ENCODE measurements at regions of chr17 and their contacts with region 1.

Region 1: GRCh38 chr17:29807520-29808351 is 122.3 kb downstream of the SSH2 start:
- DNase-seq: peak; percentile 49 to 72
- ATAC-seq: peak; percentile 81

Region 2: DNA sequence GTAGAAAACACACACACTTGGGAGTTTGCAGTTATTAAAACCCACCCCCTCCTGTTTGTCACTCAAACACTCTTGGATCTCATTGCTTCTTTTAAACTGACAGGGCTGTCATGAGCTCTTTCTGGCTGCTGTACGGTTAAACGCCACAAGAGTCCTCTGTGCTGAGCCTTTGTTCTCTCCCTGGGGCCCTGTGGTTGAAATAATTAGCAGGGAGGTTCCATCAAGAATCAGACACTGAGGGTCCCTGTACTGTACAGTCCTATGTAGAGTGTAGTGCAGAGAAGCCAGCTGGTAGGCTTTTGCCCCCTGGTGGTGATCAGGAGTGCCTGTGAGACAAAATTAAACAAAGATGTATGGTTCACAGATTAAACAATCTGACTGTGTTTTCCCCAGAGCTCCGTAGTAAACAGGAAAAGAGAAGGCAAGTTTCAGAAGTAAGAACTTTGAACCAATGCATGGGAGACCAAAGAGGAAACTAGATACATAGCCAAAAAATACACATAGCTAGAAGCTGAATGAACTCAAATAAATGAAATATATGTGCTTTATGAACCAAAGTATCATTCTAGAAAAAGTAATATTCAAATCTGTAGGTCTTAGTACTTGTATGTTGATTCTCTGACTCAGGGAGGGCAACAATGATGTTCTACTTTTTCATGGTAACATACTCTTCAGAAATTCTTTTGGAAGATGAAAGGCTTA is 123.6 kb after region 1 on chr17:
- intact Hi-C with region 1: loop called (anchors 5 to 10 kb)
- DNase-seq: peak; percentile 64 to 72
- ATAC-seq: peak; percentile 50

Region 3: GRCh38 chr17:30021708-30022317 is 214.1 kb after region 1 on chr17:
- intact Hi-C with region 1: loop called in 1 of 2 experiments (anchors 10 kb)
- DNase-seq: peak in 1 of 2 donors; percentile 18
- ATAC-seq: peak; percentile 61